Activated CD4-positive, alpha-beta memory T cell treated with anti-CD3 and anti-CD28 coated beads for 36 hours (primary cell): ENCODE measurements at regions of chr1 and their contacts with region 1.

Region 1: GRCh38 chr1:205430696-205431305 is 8.9 kb upstream of the LEMD1 start:
- DNase-seq: peak; percentile 73
- H3K4me3 Mint-ChIP-seq: peak overlapping the region; percentile 76
- H3K27ac Mint-ChIP-seq: no peak overlapping the region
- H3K4me1 Mint-ChIP-seq: peaks cover 10% of the 10 kb centered on the region
- H3K27me3 Mint-ChIP-seq: peaks cover 14% of the 10 kb centered on the region

Region 2: DNA sequence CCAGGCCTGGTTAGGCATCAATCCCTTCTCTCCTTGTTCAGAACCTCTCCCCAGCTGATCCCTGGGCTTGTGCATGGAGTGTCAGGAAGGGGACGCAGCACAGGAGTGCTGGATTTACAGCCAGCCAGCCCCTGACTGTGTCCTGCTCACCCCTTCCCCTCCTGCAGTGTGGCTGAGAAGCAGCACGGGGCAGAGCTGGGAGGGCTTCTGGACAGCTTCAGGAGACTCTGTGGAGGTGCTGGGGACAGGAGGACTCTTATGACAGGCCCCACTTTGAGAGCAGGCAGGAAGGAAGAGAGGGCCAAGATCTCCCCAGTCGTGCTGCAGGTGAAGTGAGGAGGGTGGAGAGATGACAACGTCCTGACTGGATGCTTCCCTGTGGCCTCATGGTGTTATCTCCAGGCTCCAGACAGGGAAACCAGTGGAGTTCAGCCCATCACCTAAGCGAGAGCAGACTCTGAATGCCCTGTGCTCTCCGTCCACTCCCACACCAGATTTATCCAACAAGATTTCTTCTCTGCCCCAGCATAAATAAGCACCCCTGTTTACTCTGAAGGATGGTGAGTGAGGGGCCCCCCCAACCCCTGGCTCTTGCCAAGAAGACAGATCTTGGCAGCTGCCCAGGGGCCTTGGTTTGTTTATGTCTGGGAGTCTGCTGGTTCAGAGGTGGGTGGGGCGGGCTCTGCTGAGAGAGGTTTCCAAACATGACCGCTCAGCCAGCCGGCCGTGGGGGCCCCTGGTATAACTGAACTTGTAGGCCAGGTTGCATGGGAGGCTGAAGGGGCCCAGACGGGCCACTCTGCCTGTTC is 181.8 kb before region 1 on chr1:
- CTCF ChIA-PET with region 1: no interaction called
- POLR2A ChIA-PET with region 1: no interaction called
- intact Hi-C with region 1: no loop called
- DNase-seq: no peak
- H3K4me3 Mint-ChIP-seq: no peak overlapping the region
- H3K27ac Mint-ChIP-seq: no peak overlapping the region
- H3K4me1 Mint-ChIP-seq: peaks cover 14% of the 10 kb centered on the region
- H3K27me3 Mint-ChIP-seq: peaks cover 5% of the 10 kb centered on the region

Region 3: GRCh38 chr1:205396967-205397616 is 33.7 kb before region 1 on chr1:
- CTCF ChIA-PET with region 1: interaction called, 11 read pairs
- POLR2A ChIA-PET with region 1: no interaction called
- intact Hi-C with region 1: no loop called
- DNase-seq: peak; percentile 27
- H3K4me3 Mint-ChIP-seq: no peak overlapping the region
- H3K27ac Mint-ChIP-seq: no peak overlapping the region
- H3K4me1 Mint-ChIP-seq: no peaks in the 10 kb centered on the region
- H3K27me3 Mint-ChIP-seq: peaks cover 6% of the 10 kb centered on the region

Region 4: GRCh38 chr1:205416322-205416721 is 14.5 kb before region 1 on chr1:
- CTCF ChIA-PET with region 1: interaction called, 18 read pairs
- POLR2A ChIA-PET with region 1: no interaction called
- intact Hi-C with region 1: no loop called
- DNase-seq: no peak
- H3K4me3 Mint-ChIP-seq: no peak overlapping the region
- H3K27ac Mint-ChIP-seq: no peak overlapping the region
- H3K4me1 Mint-ChIP-seq: no peaks in the 10 kb centered on the region
- H3K27me3 Mint-ChIP-seq: peaks cover 4% of the 10 kb centered on the region

Region 5: GRCh38 chr1:205495237-205495823 is 64.5 kb after region 1 on chr1:
- CTCF ChIA-PET with region 1: no interaction called
- POLR2A ChIA-PET with region 1: no interaction called
- intact Hi-C with region 1: no loop called
- DNase-seq: no peak
- H3K4me3 Mint-ChIP-seq: no peak overlapping the region
- H3K27ac Mint-ChIP-seq: no peak overlapping the region
- H3K4me1 Mint-ChIP-seq: peaks cover 2% of the 10 kb centered on the region
- H3K27me3 Mint-ChIP-seq: peaks cover 15% of the 10 kb centered on the region